HepG2 (cell line): ENCODE measurements at regions of chr14 and their contacts with region 1.

Region 1: DNA sequence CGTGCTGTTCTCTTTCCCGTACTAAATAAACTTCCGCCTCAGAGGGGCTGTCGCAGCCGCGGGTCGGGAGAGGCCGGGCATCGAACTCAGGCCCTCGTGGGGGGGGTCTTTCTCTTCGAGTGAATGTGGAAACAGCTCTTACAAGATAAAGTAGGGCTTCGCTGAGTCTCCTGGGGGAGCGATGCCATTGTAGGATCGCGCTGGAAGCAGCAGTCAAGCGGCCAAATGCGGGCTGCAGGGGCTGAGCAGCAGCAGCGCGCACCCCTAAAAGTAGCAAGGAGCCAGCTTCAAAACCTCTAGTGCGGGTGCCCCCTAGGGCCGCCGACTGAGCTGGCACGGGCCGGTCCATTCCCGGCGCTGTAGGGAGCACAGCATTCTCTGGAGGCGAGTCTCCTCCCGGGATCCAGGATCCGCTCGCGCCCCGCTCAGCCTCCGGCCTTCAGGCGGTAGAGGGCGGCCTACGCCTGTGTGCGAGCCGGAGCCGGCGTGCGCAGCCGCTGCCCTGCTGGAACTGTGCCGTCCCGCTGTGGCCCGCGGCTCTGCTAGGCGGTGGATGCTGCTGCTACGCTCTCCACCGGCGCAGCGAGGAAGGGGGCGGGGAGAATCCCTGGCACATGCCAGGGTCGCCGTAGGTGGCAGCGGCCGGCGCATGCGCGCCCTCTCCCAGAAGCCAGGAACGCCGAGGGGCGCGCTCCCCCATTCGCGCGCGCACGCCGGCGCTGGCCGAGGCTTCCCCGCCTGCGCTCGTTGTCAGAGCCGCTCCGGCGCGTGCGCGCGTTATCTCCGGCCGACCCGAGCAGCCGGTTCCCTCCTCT is at the start of gene FUT8:
- DNase-seq: peak; percentile 81
- ATAC-seq: peak; percentile 92
- H3K4me3 ChIP-seq: peak within 1 kb of the TSS; percentile 86 to 94 (median 93)
- H3K27ac ChIP-seq: peak within 1 kb of the TSS; percentile 59
- H3K4me1 ChIP-seq: peaks cover 23% of the 10 kb centered on the region
- H3K27me3 ChIP-seq: no peaks in the 10 kb centered on the region
- CTCF ChIP-seq: peak; percentile 88
- EP300 ChIP-seq: 0 out of 4 replicates have a peak, but pooled peaks of 1 of the 2 experiments have one; percentile 13
- POLR2A ChIP-seq: peak; percentile 63 to 70; a peak in 3 of 4 replicates
- RAD21 ChIP-seq: peak; percentile 91
- total RNA-seq, gene FUT8: 14.9 and 17.5 TPM in 2 replicates

Region 2: GRCh38 chr14:65164068-65164824 is 248.0 kb before region 1 on chr14:
- CTCF ChIA-PET with region 1: interaction called, 3 read pairs
- POLR2A ChIA-PET with region 1: no interaction called
- in situ Hi-C with region 1: no loop called
- intact Hi-C with region 1: loop called (anchors 1 kb)
- DNase-seq: peak; percentile 43
- ATAC-seq: peak; percentile 80
- H3K4me3 ChIP-seq: no peak overlapping the region
- H3K27ac ChIP-seq: no peak overlapping the region
- H3K4me1 ChIP-seq: peaks cover 11% of the 10 kb centered on the region
- H3K27me3 ChIP-seq: no peaks in the 10 kb centered on the region
- CTCF ChIP-seq: peak; percentile 68
- EP300 ChIP-seq: no peak
- POLR2A ChIP-seq: no peak
- RAD21 ChIP-seq: peak; percentile 71

Region 3: DNA sequence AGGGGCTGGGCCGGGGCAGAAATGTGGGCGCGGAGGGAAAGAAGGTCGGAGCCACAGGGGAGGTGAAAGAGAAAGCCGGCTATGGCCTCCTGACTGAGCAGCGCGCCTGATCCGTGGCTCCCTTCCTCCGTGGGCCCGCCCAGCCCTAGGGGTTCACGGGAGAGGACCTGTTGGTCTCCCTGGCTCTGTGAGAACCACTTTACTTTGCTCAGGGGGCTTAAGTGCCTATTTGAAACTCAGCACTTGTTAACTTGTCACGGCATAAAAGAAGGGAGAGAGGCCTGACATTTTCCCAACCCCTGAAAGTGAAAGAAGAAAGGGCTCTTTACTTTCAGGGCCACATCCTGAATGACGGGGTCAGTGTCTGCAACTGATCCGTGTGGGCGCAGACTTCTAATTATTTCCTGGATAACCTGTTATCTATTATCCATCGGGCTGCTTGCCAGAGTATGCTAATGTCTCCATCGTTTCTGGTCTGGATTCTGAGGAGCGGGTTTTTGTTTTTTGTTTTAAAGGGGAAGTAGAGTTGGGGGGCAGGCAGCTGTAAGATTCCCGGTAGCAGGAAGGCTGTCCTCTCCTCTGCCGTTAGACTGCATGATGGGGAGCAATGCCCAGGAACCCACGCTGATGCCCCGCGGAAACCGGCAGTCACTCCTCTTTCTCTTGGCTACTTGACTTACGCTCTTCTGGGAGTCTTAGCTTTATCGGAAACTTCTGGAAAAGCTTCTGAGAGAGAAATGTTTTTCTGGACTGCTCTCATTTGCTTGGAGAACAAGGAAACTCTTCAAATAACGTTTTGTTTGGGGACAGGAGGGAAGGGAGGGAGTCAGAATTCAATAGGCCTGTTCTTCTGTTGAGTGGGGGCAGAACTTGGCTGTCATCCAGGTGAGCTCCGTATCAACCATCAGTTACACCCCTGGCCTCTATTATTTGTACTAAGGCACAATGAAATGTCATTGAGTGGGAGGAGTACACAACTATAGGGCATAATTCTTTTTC is 182.2 kb before region 1 on chr14:
- CTCF ChIA-PET with region 1: no interaction called
- POLR2A ChIA-PET with region 1: interaction called, 26 read pairs
- in situ Hi-C with region 1: loop called (anchors 5 kb)
- intact Hi-C with region 1: loop called (anchors 1 kb)
- DNase-seq: peak; percentile 96
- ATAC-seq: peak; percentile 44
- H3K4me3 ChIP-seq: peak overlapping the region; percentile 64 to 73 (median 67)
- H3K27ac ChIP-seq: peak overlapping the region; percentile 90
- H3K4me1 ChIP-seq: peaks cover 72% of the 10 kb centered on the region
- H3K27me3 ChIP-seq: no peaks in the 10 kb centered on the region
- CTCF ChIP-seq: no peak
- EP300 ChIP-seq: peak in 1 of 2 experiments; percentile 69; a peak in 2 of 4 replicates
- POLR2A ChIP-seq: peak; percentile 66 to 75
- RAD21 ChIP-seq: no peak

Region 4: DNA sequence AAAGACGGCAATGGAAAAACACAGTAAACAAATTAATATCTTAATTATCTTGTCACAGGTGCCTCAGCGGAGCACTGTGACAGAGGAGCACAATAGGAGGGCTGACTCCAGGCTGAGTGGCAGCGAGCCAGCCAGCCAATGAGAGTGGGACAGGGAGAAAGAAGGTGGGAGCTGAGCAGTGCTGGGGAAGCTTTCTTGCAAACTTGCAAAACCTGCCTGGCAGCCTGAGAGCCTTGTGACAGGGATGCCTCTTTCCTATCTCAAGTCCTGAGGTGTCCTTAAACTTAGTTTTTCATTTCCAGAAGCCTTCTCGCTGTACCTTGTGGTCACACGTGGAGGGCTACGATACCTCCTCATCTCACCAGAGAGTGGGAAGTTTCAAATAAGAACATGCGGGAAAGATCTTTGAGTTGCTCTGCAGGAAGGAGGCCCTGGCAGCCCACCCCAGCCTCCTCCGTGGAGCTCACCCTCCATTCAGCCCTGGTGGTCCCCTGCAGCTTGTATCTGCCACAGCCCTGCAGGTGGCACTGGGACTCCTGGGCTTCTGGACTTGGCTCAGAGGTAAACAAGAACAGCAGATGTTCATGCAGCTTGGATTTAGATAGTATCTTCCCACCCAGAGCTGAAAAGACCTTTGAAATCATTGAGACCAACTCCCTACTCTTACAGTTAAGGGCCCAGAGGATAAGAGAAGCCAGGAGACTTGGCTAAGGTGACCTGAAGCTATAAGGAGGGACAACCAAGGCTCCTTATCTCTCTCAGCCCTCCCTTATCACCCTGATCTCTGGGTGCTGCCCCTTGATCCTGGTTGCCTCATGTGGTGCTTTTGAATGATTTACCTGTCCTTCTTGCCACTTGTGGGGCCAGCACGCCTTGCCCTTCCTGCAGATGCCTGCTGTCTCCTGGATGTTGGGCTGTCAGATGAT is 156.4 kb before region 1 on chr14:
- CTCF ChIA-PET with region 1: no interaction called
- POLR2A ChIA-PET with region 1: interaction called, 12 read pairs
- in situ Hi-C with region 1: no loop called
- intact Hi-C with region 1: no loop called
- DNase-seq: peak; percentile 69
- ATAC-seq: peak; percentile 82
- H3K4me3 ChIP-seq: peak overlapping the region; percentile 13 to 58 (median 20); a peak in 5 of 6 replicates
- H3K27ac ChIP-seq: peak overlapping the region; percentile 57
- H3K4me1 ChIP-seq: peaks cover 59% of the 10 kb centered on the region
- H3K27me3 ChIP-seq: no peaks in the 10 kb centered on the region
- CTCF ChIP-seq: peak; percentile 67
- EP300 ChIP-seq: 0 out of 4 replicates have a peak, but pooled peaks of 1 of the 2 experiments have one; percentile 2
- POLR2A ChIP-seq: no peak
- RAD21 ChIP-seq: no peak

Region 5: GRCh38 chr14:65594153-65594881 is 182.1 kb after region 1 on chr14:
- CTCF ChIA-PET with region 1: no interaction called
- POLR2A ChIA-PET with region 1: no interaction called
- in situ Hi-C with region 1: no loop called
- intact Hi-C with region 1: no loop called
- DNase-seq: peak; percentile 68
- ATAC-seq: peak; percentile 100
- H3K4me3 ChIP-seq: peak overlapping the region in 2 of 3 experiments; percentile 35 to 38; a peak in 2 of 6 replicates
- H3K27ac ChIP-seq: no peak overlapping the region
- H3K4me1 ChIP-seq: peaks cover 13% of the 10 kb centered on the region
- H3K27me3 ChIP-seq: no peaks in the 10 kb centered on the region
- CTCF ChIP-seq: no peak
- EP300 ChIP-seq: 0 out of 4 replicates have a peak, but pooled peaks of 1 of the 2 experiments have one; percentile 35
- POLR2A ChIP-seq: no peak
- RAD21 ChIP-seq: no peak

Region 6: GRCh38 chr14:65824285-65824977 is 412.2 kb after region 1 on chr14:
- CTCF ChIA-PET with region 1: interaction called, 14 read pairs
- POLR2A ChIA-PET with region 1: interaction called, 3 read pairs
- in situ Hi-C with region 1: loop called (anchors 5 kb)
- intact Hi-C with region 1: loop called (anchors 1 kb)
- DNase-seq: peak; percentile 57
- ATAC-seq: peak; percentile 82
- H3K4me3 ChIP-seq: no peak overlapping the region
- H3K27ac ChIP-seq: no peak overlapping the region
- H3K4me1 ChIP-seq: no peaks in the 10 kb centered on the region
- H3K27me3 ChIP-seq: peaks cover 14 to 54% of the 10 kb centered on the region in 2 experiments
- CTCF ChIP-seq: peak; percentile 86
- EP300 ChIP-seq: no peak
- POLR2A ChIP-seq: no peak
- RAD21 ChIP-seq: peak; percentile 30; the same call in 1 of the 2 replicates

Region 7: DNA sequence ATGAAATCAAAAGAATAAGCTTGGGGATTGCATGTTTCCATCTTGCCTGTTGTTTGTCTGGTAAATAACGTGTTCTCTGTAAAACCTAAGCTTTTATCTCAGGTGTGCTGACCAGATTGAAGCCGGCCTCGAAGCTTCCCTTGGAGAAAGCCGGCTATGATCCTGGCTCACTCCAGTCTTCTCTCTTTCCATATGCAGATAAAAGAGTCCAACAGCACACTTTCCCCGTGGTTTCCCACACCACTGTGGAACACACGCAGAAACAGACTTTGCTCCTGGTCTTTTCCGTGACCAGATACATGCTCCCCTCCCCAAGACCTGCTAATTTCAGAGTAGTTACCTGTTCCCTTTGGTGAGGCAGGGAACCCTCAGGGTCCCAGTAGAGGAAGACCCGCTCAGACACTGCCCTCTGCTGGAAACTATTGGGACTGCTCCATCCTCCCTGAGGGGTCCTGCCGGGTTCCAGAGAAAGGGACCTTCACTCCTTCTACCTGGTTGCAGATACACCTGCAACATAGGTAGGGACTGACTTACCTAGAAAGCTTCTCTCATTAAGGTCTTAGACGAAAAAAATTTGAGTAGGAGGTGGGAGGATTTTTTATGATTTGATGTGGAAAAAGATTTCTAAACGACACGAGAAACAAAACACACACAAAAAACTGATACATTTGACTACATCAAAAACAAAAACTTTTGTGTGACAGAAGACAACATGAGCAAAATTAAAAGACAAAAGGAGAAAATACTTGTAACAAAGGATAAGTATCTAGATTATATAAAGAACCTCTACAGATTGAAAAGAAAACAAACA is 658.5 kb after region 1 on chr14:
- CTCF ChIA-PET with region 1: no interaction called
- POLR2A ChIA-PET with region 1: no interaction called
- in situ Hi-C with region 1: no loop called
- intact Hi-C with region 1: loop called (anchors 10 kb)
- DNase-seq: peak; percentile 18
- ATAC-seq: peak; percentile 94
- H3K4me3 ChIP-seq: no peak overlapping the region
- H3K27ac ChIP-seq: no peak overlapping the region
- H3K4me1 ChIP-seq: no peaks in the 10 kb centered on the region
- H3K27me3 ChIP-seq: peaks cover 0 to 34% of the 10 kb centered on the region in 2 experiments; a peak in 3 of 5 replicates
- CTCF ChIP-seq: peak; percentile 80
- EP300 ChIP-seq: no peak
- POLR2A ChIP-seq: no peak
- RAD21 ChIP-seq: peak; percentile 47; the same call in 1 of the 2 replicates